Dorsolateral prefrontal cortex (tissue), 120 donors: ENCODE measurements at regions of chr10 and their contacts with region 1.

Region 1: DNA sequence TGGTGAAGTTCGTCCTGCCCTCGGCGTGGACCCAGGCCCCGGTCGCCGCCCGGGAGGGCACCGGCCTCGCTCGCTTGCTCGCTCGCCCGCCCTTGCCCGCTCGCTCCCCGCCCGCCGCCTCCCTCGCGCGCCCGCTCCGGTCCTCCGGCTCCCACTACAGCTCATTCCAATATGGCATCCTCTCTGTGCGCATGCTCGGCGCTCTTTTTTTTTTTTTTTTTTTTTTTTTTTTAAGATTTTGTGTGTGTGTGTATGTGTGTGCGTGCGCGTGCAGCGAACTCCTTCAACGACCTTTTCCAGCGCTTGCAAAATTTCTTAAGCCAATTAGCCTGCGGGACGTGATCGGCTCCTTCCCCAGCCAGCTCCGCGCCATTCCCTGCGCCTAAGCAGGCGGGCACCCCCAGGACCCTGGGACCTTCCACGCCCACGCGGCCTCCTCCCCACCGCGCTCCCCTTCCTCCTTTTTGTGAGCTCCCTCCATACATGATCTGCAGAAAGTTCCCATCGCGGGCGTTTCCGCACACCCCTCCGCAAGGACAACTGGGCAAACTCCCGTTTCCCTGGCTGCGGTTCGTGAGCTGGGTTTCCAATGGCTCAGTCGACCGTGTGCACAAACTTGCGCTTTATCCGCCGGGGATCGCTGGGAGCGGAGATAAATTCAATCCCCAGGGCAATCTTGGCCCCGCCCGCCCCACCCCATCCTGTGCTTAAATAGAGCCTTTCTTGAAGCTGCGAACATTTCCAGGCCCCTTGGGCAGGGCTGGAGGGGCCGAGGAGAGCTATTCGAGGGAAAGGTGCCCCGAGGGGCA is at the start of gene SFMBT2:
- DNase-seq: peak; percentile 40 to 76 (median 65)
- H3K4me3 ChIP-seq: peak within 1 kb of the TSS; percentile 61 to 92 (median 79)
- H3K27ac ChIP-seq: peak within 1 kb of the TSS; percentile 41 to 93 (median 84)
- H3K27me3 ChIP-seq: peaks cover 0 to 18% (median 0%) of the 10 kb centered on the region in 45 donors
- CTCF ChIP-seq: peak in 34 of 56 donors; percentile 4 to 58 (median 30)
- total RNA-seq, gene SFMBT2: 14.7 to 38.1 (median 24.3) TPM

Region 2: DNA sequence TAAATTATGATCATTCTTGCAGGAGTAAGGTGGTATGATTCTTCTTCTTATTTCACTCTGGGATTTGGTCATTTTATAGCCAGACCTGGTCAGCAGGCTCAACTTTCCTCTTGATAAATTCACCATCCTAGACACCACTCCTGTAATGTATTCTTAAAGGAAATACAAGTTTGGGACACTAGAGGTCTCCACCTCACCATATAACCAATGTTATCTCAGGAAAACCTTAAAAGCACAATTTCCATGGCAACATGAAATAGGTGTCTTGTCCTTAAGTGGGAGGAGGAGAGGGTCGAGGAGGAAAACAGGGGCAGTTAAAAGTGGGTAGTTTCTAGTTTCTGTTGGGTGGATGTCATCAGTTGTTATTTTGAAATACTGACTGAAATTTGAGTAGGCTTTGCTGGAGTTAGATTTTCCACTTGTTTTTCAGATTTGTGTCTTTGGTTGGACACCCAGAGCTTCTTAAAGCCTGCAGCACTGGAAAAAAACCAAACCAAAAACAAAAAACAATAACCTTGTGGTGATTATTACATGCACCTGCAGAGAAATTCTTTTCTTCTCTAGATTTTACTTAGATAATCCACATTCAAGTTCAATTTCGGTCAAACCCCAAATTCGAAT is 994.1 kb before region 1 on chr10:
- intact Hi-C with region 1: loop called (anchors 10 kb)
- DNase-seq: no peak
- H3K4me3 ChIP-seq: no peak overlapping the region
- H3K27ac ChIP-seq: no peak overlapping the region
- H3K27me3 ChIP-seq: no peaks in the 10 kb centered on the region
- CTCF ChIP-seq: peak; percentile 44 to 84 (median 71)

Region 3: DNA sequence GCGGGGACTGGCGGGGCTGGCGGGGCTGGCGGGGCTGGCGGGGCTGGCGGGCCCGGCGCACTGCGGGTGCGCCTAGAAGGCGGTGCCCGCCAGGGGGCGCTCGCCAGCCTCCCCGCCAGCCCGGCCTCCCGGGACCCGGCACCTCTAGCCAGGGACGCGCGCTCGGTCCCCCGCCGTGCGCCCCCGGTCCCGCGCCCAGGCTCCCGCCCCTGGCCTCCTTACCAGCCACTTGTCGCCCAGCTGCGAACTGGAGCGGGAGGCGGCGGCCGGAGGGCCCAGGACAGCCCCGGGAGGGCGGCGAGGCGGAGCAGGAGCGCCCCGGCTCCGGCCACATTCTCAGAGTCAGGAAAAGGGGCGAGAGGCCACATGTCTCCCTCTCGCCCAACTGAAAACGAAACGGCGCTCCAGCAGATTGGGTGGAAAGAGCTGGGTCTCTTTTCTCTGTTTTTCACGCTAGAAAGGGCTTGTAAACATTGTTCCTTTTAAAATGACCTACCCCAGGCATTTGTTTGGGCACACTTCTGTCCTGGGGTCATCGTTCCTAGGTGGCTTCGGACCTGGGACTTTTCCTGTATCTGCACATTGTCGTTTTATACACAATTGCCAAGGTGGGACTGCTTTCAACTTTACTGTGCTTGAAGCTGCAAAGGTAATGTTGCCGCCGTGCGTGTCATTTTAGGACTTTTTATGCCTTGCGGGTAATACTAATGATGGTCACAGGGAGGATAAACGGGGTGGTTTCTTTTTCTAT is 830.6 kb before region 1 on chr10:
- intact Hi-C with region 1: loop called in 1 of 2 experiments (anchors 10 kb)
- DNase-seq: peak; percentile 16 to 91 (median 78)
- H3K4me3 ChIP-seq: peak overlapping the region; percentile 54 to 88 (median 76)
- H3K27ac ChIP-seq: peak overlapping the region; percentile 22 to 94 (median 86)
- H3K27me3 ChIP-seq: peaks cover 0 to 6% (median 0%) of the 10 kb centered on the region in 45 donors
- CTCF ChIP-seq: peak in 55 of 56 donors; percentile 6 to 86 (median 56)

Region 4: DNA sequence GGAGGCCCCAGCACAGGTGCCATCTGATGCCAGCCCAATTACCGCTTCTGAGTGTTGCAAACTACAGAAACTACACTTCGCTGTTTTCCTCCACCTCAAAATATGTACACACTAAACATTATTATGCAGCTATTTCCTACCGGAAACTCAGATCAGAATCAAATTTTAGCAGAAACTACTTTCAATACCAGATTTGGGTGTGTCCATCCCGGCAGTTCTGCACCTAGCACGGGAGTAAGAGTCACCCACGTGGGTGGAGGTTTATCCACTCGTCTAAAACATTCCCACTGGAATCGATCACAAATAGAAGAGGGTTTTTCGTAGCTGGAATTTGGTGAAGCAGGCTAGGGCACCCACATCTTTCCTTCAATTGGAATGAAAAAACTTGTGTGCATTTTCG is 616.6 kb before region 1 on chr10:
- intact Hi-C with region 1: loop called in 1 of 2 experiments (anchors 5 kb)
- DNase-seq: no peak
- H3K4me3 ChIP-seq: no peak overlapping the region
- H3K27ac ChIP-seq: no peak overlapping the region
- H3K27me3 ChIP-seq: peaks cover 0 to 6% (median 0%) of the 10 kb centered on the region in 45 donors
- CTCF ChIP-seq: no peak

Region 5: GRCh38 chr10:6920072-6921019 is 490.7 kb before region 1 on chr10:
- intact Hi-C with region 1: loop called (anchors 2 kb)
- DNase-seq: peak; percentile 71 to 88 (median 84)
- H3K4me3 ChIP-seq: peak overlapping the region in 45 of 59 donors; percentile 5 to 54 (median 31)
- H3K27ac ChIP-seq: peak overlapping the region in 42 of 59 donors; percentile 4 to 74 (median 52)
- H3K27me3 ChIP-seq: peaks cover 0 to 3% (median 0%) of the 10 kb centered on the region in 45 donors
- CTCF ChIP-seq: peak in 55 of 56 donors; percentile 35 to 86 (median 74)

Region 6: DNA sequence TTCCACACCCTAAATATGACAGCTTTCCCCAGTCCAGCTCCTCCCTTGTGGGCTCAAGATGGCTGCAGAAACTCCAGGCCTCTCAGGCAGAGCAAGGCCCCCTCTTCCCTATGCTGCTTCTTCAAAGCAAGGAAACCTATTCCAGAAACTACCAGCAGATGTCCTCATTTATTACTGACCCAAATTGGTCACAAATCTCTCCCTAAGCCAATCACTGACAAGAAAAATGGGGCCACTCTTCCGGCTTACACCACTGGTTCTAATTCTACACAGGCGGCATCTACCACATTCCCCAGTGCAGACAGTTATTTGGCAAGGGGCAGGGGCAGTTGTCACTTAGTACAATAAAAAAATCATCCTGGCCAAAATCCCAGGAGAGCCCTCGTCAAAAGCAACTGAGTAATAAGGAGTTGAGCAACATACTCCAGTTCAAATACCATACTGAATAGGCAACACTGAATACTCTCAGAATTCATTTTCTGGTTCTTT is 150.6 kb before region 1 on chr10:
- intact Hi-C with region 1: loop called (anchors 1 to 2 kb)
- DNase-seq: peak in 5 of 10 donors; percentile 38 to 63 (median 45)
- H3K4me3 ChIP-seq: peak overlapping the region in 4 of 59 donors; percentile 9 to 22 (median 14)
- H3K27ac ChIP-seq: peak overlapping the region in 24 of 59 donors; percentile 5 to 65 (median 28)
- H3K27me3 ChIP-seq: no peaks in the 10 kb centered on the region
- CTCF ChIP-seq: peak; percentile 49 to 88 (median 79)

Region 7: GRCh38 chr10:7397049-7398035 is 13.7 kb before region 1 on chr10:
- intact Hi-C with region 1: no loop called
- DNase-seq: peak in 1 of 10 donors; percentile 24
- H3K4me3 ChIP-seq: peak overlapping the region in 29 of 59 donors; percentile 2 to 52 (median 23)
- H3K27ac ChIP-seq: peak overlapping the region in 5 of 59 donors; percentile 4 to 60 (median 14)
- H3K27me3 ChIP-seq: no peaks in the 10 kb centered on the region
- CTCF ChIP-seq: peak in 1 of 56 donors; percentile 18

Region 8: GRCh38 chr10:7592627-7593026 is 181.6 kb after region 1 on chr10:
- intact Hi-C with region 1: no loop called
- DNase-seq: no peak
- H3K4me3 ChIP-seq: no peak overlapping the region
- H3K27ac ChIP-seq: no peak overlapping the region
- H3K27me3 ChIP-seq: no peaks in the 10 kb centered on the region
- CTCF ChIP-seq: no peak